AG04450 (cell line): ENCODE measurements at regions of chr20 and their contacts with region 1.

Region 1: DNA sequence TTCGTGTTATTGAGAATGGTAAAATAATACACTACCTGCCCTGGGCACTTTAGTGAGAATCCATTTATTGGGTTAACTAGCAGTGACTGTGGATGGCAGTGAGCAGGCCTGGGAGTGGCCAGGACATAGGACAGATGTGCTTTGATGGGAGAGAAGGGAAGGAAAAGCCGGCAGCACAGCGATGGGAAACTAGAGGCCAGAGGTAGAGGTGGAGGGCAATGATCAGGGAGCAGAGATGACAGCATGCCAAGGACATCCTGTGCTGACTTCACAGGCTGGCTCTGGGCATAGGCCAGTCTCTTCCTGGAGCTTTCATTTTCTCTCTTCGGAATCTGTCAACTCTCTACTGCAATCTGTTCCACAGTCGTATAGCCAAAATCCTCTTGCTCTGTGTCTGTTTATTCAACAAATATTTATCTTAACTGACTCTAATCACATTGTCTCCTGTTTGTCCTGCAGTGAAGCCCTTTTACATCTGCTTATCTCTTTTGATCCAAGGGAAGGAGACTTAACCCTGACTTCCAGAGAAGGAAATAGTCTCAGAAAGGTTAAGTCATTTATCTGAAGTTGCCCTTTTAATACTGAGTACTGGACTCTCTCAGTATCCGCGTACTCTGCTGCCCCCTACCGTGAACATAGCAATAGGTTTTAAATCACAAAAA is 18.4 kb upstream of the MMP24 start:
- DNase-seq: peak; percentile 61
- H3K4me3 ChIP-seq: peak overlapping the region; percentile 17; the same call in 1 of the 2 replicates
- H3K27ac ChIP-seq: peak overlapping the region; percentile 47
- H3K27me3 ChIP-seq: no peaks in the 10 kb centered on the region
- CTCF ChIP-seq: peak; percentile 84

Region 2: GRCh38 chr20:35192111-35192872 is 15.8 kb before region 1 on chr20:
- CTCF ChIA-PET with region 1: interaction called, 11 read pairs
- POLR2A ChIA-PET with region 1: no interaction called
- DNase-seq: no peak
- H3K4me3 ChIP-seq: no peak overlapping the region
- H3K27ac ChIP-seq: no peak overlapping the region
- H3K27me3 ChIP-seq: no peaks in the 10 kb centered on the region
- CTCF ChIP-seq: no peak

Region 3: DNA sequence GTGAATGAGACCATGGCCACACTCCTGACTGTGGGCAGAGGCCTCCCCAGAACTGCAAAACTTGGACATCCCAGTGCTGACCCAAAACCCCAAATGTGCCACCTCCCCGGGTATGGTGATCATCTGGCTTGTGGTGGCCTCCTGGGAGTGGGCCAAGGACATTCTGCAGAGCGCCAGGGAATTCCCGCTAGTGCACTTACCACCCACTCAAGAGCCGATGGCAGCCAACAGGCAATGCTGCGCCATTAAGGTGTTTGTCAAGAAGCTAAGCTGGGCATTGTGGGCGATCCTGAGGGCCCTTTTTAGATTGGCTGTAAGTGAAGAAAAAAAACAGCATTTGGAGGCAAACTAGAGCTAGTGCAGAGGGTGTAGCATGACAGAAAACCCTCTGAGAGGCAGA is 27.8 kb after region 1 on chr20:
- CTCF ChIA-PET with region 1: no interaction called
- POLR2A ChIA-PET with region 1: no interaction called
- DNase-seq: no peak
- H3K4me3 ChIP-seq: no peak overlapping the region
- H3K27ac ChIP-seq: no peak overlapping the region
- H3K27me3 ChIP-seq: peaks cover 8% of the 10 kb centered on the region
- CTCF ChIP-seq: no peak